Dendritic cell treated with granulocyte-macrophage colony-stimulating factor and Interleukin-4, amounts not matched to agents 40 ng/mL and 50 ng/mL, for 4 days (primary cell): ENCODE measurements at regions of chr3 and their contacts with region 1.

Region 1: DNA sequence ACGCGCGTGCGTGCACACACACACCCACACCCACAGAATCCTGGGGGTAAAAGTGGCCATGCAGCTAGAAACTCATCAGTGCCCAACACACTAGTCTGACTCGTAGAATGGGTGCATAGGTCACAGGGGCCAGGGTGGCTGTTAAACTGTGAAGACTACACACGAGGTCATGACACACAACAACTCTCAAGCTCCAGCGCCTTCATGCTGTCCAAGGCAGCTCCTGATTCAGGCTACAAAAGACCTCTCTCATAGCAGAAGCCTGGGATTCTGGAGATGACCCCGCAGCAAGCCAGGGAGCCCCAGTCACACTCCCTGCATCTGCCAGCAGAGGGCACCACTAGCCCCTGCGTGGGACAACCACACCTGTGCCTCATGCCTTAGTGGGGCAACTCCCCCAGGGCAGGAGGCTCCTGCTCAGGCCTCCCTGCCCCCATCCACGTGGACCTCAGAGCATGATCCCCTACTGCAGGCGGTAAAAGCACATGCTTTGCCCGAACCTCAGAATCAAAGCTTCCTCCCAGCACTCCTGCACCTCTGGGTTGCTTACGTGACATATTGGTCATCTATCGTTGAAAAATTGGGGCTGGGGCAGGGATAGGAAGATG is 93.1 kb downstream of the LRIG1 start:
- H3K4me3 Mint-ChIP-seq: no peak overlapping the region
- H3K27ac Mint-ChIP-seq: no peak overlapping the region
- H3K4me1 Mint-ChIP-seq: no peaks in the 10 kb centered on the region
- H3K27me3 Mint-ChIP-seq: no peaks in the 10 kb centered on the region

Region 2: DNA sequence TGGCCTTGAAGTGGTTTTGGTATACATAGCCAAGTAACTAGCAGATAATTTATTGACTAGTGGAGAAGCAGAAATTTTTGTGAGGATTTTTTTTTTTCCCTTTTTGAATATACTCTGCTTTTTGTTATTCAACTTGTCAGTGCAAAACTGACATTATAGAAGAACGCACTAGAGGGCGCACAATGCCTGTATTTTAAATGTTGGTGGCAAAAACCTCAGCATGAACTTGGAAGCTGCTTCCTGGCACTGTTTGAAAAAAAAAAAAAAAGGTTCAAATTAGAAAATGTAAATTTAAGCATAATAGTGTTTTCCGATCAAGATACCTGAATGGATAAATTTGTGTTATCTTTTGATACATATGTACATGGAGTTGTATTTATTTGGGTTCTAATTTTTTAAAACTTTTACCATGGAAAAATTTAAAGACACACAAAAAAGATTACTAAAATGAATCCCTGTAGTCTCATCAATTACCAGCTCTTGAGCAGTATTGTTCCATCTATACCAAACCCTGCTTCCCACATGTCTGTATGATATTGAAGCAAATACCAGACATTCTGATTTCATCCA is 130.9 kb before region 1 on chr3:
- intact Hi-C with region 1: loop called (anchors 2 kb)
- H3K4me3 Mint-ChIP-seq: no peak overlapping the region
- H3K27ac Mint-ChIP-seq: no peak overlapping the region
- H3K4me1 Mint-ChIP-seq: no peaks in the 10 kb centered on the region
- H3K27me3 Mint-ChIP-seq: no peaks in the 10 kb centered on the region